Heart right ventricle (tissue), 16 donors: ENCODE measurements at regions of chr4 and their contacts with region 1.

Region 1: DNA sequence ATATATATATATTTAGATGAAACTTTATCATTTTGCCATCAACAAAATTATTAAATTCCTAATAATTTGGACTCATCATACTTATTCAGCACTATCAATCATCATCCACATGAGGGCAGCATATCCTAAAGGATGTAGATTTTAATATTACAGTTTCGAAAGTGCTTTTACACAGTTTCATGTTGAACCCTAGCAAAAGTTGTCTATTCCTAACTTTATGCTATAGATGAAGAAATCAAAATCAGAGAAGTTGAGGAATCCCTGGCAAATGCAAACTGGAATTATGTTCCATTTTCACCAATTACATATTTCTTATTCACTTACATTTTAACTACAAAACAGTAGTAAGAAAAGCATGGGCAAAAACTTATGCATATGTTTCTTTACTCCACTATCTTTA is 36.6 kb upstream of the UGT2A1 start:
- DNase-seq: no peak
- ATAC-seq: no peak
- H3K4me3 ChIP-seq: no peak overlapping the region
- H3K27ac ChIP-seq: no peak overlapping the region
- H3K4me1 ChIP-seq: no peaks in the 10 kb centered on the region
- H3K27me3 ChIP-seq: no peaks in the 10 kb centered on the region
- CTCF ChIP-seq: peak; percentile 12 to 65 (median 56)

Region 2: DNA sequence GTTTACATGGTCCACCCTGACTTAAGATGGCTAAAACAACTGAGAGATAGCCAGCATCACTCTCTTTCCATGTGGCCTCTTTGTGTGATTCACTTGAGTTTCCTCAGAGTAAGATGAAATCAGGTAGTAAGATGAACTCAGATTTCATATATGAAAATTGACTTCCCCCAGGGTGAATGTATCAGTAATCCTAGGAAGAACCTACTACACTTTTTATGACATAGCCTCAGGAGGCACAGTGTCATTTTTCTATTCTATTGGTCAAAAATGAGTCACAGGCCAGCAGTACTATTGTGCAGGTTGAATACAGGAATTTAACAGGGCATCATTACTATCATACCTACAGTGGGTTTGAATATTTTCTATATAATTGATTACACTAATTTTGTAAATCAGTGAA is 184.9 kb after region 1 on chr4:
- intact Hi-C with region 1: loop called in 1 of 10 experiments (anchors 10 kb)
- DNase-seq: no peak
- ATAC-seq: no peak
- H3K4me3 ChIP-seq: no peak overlapping the region
- H3K27ac ChIP-seq: no peak overlapping the region
- H3K4me1 ChIP-seq: no peaks in the 10 kb centered on the region
- H3K27me3 ChIP-seq: no peaks in the 10 kb centered on the region
- CTCF ChIP-seq: no peak

Region 3: DNA sequence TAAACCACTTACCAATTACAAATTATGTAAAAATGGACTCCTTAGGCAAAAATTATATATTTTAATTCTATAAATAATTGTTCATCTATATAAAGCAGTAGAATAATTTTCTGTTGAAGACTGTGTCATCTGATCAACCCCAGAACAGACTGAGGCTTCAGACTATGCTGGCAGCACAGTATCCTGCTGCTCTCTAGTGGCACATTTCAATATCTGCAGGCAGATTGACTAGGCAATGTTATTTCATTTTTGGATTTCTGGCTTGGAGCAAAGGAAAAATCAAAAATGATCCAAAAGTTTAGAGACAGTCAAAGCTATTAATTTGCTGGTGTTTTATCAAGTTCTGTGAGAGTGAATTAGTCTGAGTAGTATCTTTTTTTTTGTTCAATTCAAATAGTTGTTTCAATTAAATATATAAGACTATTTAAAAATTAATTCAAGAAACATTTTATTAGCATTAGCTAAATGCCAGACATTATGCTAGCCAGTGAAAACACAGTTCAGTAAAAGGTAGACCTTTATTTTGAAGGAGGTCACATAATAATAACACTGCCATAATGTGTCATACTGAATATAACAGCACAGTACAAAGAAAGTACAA is 191.7 kb after region 1 on chr4:
- intact Hi-C with region 1: loop called in 7 of 10 experiments (anchors 2 to 10 kb)
- DNase-seq: peak in 1 of 2 donors; percentile 3
- ATAC-seq: peak in 3 of 8 donors; percentile 49 to 70 (median 59)
- H3K4me3 ChIP-seq: no peak overlapping the region
- H3K27ac ChIP-seq: no peak overlapping the region
- H3K4me1 ChIP-seq: no peaks in the 10 kb centered on the region
- H3K27me3 ChIP-seq: no peaks in the 10 kb centered on the region
- CTCF ChIP-seq: peak in 8 of 9 donors; percentile 14 to 72 (median 58)

Region 4: DNA sequence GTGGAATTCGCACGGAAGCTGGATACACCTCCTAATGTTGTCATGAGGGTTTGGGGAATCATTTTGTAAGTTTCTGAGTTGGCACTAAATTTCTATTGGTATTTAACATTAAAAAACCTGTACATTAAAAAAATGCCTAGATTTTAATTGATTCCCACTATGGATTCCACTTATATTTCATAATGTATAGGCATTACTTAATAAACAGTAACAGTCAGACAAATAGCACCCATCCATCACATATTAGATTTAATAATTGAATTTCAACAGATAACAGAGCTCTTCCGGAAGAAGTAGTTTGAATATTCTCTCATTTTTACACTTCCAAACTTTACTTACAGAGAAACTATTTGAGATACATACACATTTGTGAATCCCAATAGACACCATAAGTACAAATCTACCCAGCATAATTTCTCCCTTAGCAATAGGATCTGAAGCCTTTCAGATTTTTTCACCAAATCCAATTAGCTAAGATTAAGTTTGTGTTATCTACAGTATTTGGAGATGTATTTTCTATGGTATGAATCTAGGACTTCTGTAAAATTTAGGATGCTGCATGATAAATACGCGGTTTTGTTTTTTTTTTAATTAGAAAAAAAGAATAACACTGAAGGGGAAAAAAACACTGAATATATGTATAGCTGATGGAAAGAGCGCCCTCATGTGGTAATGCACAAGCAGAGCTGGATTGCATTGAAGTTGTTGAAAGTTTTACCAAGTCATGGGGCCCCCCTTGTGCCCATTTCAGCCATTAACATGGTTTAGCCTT is 493.8 kb after region 1 on chr4:
- intact Hi-C with region 1: loop called in 2 of 10 experiments (anchors 10 kb)
- DNase-seq: no peak
- ATAC-seq: no peak
- H3K4me3 ChIP-seq: no peak overlapping the region
- H3K27ac ChIP-seq: no peak overlapping the region
- H3K4me1 ChIP-seq: no peaks in the 10 kb centered on the region
- H3K27me3 ChIP-seq: no peaks in the 10 kb centered on the region
- CTCF ChIP-seq: peak in 7 of 9 donors; percentile 15 to 63 (median 45)

Region 5: GRCh38 chr4:70505151-70505748 is 815.7 kb after region 1 on chr4:
- intact Hi-C with region 1: loop called in 2 of 10 experiments (anchors 10 kb)
- DNase-seq: peak; percentile 5 to 25
- ATAC-seq: no peak
- H3K4me3 ChIP-seq: no peak overlapping the region
- H3K27ac ChIP-seq: no peak overlapping the region
- H3K4me1 ChIP-seq: no peaks in the 10 kb centered on the region
- H3K27me3 ChIP-seq: peaks cover 0 to 20% (median 0%) of the 10 kb centered on the region in 7 donors
- CTCF ChIP-seq: peak; percentile 33 to 94 (median 73)

Region 6: GRCh38 chr4:70559211-70559830 is 869.7 kb after region 1 on chr4:
- intact Hi-C with region 1: loop called in 3 of 10 experiments (anchors 5 to 10 kb)
- DNase-seq: peak in 1 of 2 donors; percentile 33
- ATAC-seq: no peak
- H3K4me3 ChIP-seq: no peak overlapping the region
- H3K27ac ChIP-seq: no peak overlapping the region
- H3K4me1 ChIP-seq: no peaks in the 10 kb centered on the region
- H3K27me3 ChIP-seq: no peaks in the 10 kb centered on the region
- CTCF ChIP-seq: peak in 8 of 9 donors; percentile 21 to 71 (median 63)